ENCODE measurements at regions of chr4 and their contacts with region 1.

Region 1: GRCh38 chr4:77156533-77156911 is 485 bp upstream of the CCNG2 start:
- DNase-seq: peak; percentile 99
- H3K4me3 ChIP-seq: peak overlapping the region; percentile 87 to 98
- H3K4me3 Mint-ChIP-seq: peak overlapping the region; percentile 92 to 100 (median 98)
- H3K27ac ChIP-seq: peak overlapping the region; percentile 77
- H3K27ac Mint-ChIP-seq: peak overlapping the region; percentile 97 to 99 (median 98)
- H3K4me1 ChIP-seq: peaks cover 35% of the 10 kb centered on the region
- H3K4me1 Mint-ChIP-seq: peaks cover 16 to 54% (median 24%) of the 10 kb centered on the region in 4 donors
- H3K27me3 ChIP-seq: no peaks in the 10 kb centered on the region
- H3K27me3 Mint-ChIP-seq: peaks cover 0 to 6% of the 10 kb centered on the region in 2 donors

Region 2: GRCh38 chr4:75940692-75941253 is 1215.7 kb before region 1 on chr4 and contains the start of gene NAAA:
- CTCF ChIA-PET with region 1: no interaction called
- POLR2A ChIA-PET with region 1: no interaction called
- intact Hi-C with region 1: loop called (anchors 2 kb)
- DNase-seq: peak; percentile 73 to 84 (median 80)
- H3K4me3 ChIP-seq: peak within 1 kb of the TSS; percentile 80 to 98
- H3K4me3 Mint-ChIP-seq: peak within 1 kb of the TSS; percentile 97 to 99 (median 98)
- H3K27ac ChIP-seq: peak within 1 kb of the TSS; percentile 75
- H3K27ac Mint-ChIP-seq: peak within 1 kb of the TSS; percentile 96 to 98 (median 98)
- H3K4me1 ChIP-seq: peaks cover 19% of the 10 kb centered on the region
- H3K4me1 Mint-ChIP-seq: peaks cover 10 to 35% (median 19%) of the 10 kb centered on the region in 4 donors
- H3K27me3 ChIP-seq: no peaks in the 10 kb centered on the region
- H3K27me3 Mint-ChIP-seq: no peaks in the 10 kb centered on the region
- total RNA-seq, gene NAAA: 86.1 to 92.2 TPM

Region 3: DNA sequence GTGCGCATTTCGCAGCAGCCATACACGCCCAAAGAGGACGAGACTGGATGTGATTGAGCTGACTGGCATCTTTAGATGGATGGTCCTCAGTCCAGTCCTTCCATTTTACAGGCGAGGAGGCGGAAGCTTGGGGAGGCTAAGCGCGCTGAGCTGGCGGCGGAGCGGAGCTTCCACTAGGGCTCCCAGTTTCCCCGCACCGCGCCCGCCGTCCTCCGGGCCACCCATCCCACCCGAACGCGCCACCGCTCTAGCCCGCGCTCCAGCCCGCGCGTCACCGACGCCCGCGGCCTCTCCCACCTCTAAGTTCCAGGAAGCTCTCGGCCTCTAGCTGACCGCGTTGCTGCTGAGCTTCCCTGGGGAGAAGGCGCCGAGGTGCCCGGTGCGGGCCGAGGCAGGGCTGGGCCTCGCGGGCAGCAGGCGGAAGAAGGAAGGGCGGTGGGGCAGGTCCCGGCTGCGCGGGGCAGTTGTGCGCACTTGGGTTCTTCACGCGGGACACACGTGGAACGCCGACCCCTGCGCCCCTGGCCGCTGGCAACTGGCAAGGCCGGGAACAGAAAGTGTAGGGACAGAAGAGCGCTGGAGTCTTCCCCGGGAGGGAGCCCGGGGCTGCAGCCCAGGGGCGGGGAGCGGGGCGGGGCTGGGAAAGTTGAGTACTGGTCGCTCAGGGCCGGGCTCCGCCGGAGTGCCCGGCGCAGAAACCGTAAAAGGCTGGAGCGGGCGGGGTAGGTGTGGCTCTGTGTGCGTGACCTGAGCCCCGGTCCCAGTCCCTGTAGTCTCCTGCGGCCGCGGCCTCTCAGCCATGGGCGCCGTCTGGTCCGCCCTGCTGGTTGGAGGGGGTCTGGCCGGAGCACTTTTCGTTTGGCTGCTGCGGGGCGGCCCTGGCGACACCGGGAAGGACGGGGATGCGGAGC is 850.3 kb before region 1 on chr4 and contains the start of gene STBD1:
- CTCF ChIA-PET with region 1: no interaction called
- POLR2A ChIA-PET with region 1: no interaction called
- intact Hi-C with region 1: loop called (anchors 5 kb)
- DNase-seq: peak; percentile 24 to 43 (median 32)
- H3K4me3 ChIP-seq: peak within 1 kb of the TSS; percentile 30 to 68
- H3K4me3 Mint-ChIP-seq: peak within 1 kb of the TSS; percentile 81 to 93 (median 86)
- H3K27ac ChIP-seq: peak within 1 kb of the TSS; percentile 34
- H3K27ac Mint-ChIP-seq: peak within 1 kb of the TSS; percentile 12 to 83 (median 60)
- H3K4me1 ChIP-seq: peaks cover 39% of the 10 kb centered on the region
- H3K4me1 Mint-ChIP-seq: peaks cover 29 to 54% (median 41%) of the 10 kb centered on the region in 4 donors
- H3K27me3 ChIP-seq: no peaks in the 10 kb centered on the region
- H3K27me3 Mint-ChIP-seq: no peaks in the 10 kb centered on the region
- total RNA-seq, gene STBD1: 3.6 to 3.8 TPM

Region 4: GRCh38 chr4:76485450-76485849 is 671.1 kb before region 1 on chr4:
- CTCF ChIA-PET with region 1: no interaction called
- POLR2A ChIA-PET with region 1: no interaction called
- intact Hi-C with region 1: no loop called
- DNase-seq: no peak
- H3K4me3 ChIP-seq: no peak overlapping the region
- H3K4me3 Mint-ChIP-seq: no peak overlapping the region
- H3K27ac ChIP-seq: no peak overlapping the region
- H3K27ac Mint-ChIP-seq: no peak overlapping the region
- H3K4me1 ChIP-seq: no peaks in the 10 kb centered on the region
- H3K4me1 Mint-ChIP-seq: no peaks in the 10 kb centered on the region
- H3K27me3 ChIP-seq: no peaks in the 10 kb centered on the region
- H3K27me3 Mint-ChIP-seq: peaks cover 10 to 18% of the 10 kb centered on the region in 2 donors

Region 5: GRCh38 chr4:76993787-76994641 is 162.5 kb before region 1 on chr4:
- CTCF ChIA-PET with region 1: no interaction called
- POLR2A ChIA-PET with region 1: interaction called, 3 read pairs
- intact Hi-C with region 1: loop called (anchors 2 kb)
- DNase-seq: peak; percentile 75 to 89 (median 80)
- H3K4me3 ChIP-seq: peak overlapping the region in 1 of 2 donors; percentile 5
- H3K4me3 Mint-ChIP-seq: peak overlapping the region; percentile 71 to 88 (median 81)
- H3K27ac ChIP-seq: no peak overlapping the region
- H3K27ac Mint-ChIP-seq: peak overlapping the region; percentile 83 to 96 (median 90)
- H3K4me1 ChIP-seq: peaks cover 64% of the 10 kb centered on the region
- H3K4me1 Mint-ChIP-seq: peaks cover 39 to 65% (median 51%) of the 10 kb centered on the region in 4 donors
- H3K27me3 ChIP-seq: no peaks in the 10 kb centered on the region
- H3K27me3 Mint-ChIP-seq: peaks cover 0 to 1% of the 10 kb centered on the region in 2 donors

Region 6: GRCh38 chr4:77193511-77194102 is 37.1 kb after region 1 on chr4:
- CTCF ChIA-PET with region 1: interaction called, 5 read pairs
- POLR2A ChIA-PET with region 1: interaction called, 9 read pairs
- intact Hi-C with region 1: loop called (anchors 1 kb)
- DNase-seq: peak; percentile 69 to 80 (median 70)
- H3K4me3 ChIP-seq: peak overlapping the region in 1 of 2 donors; percentile 41
- H3K4me3 Mint-ChIP-seq: peak overlapping the region; percentile 87 to 96 (median 91)
- H3K27ac ChIP-seq: peak overlapping the region; percentile 8
- H3K27ac Mint-ChIP-seq: peak overlapping the region; percentile 75 to 95 (median 90)
- H3K4me1 ChIP-seq: peaks cover 14% of the 10 kb centered on the region
- H3K4me1 Mint-ChIP-seq: peaks cover 12 to 19% (median 15%) of the 10 kb centered on the region in 4 donors
- H3K27me3 ChIP-seq: no peaks in the 10 kb centered on the region
- H3K27me3 Mint-ChIP-seq: peaks cover 0 to 2% of the 10 kb centered on the region in 2 donors

Region 7: DNA sequence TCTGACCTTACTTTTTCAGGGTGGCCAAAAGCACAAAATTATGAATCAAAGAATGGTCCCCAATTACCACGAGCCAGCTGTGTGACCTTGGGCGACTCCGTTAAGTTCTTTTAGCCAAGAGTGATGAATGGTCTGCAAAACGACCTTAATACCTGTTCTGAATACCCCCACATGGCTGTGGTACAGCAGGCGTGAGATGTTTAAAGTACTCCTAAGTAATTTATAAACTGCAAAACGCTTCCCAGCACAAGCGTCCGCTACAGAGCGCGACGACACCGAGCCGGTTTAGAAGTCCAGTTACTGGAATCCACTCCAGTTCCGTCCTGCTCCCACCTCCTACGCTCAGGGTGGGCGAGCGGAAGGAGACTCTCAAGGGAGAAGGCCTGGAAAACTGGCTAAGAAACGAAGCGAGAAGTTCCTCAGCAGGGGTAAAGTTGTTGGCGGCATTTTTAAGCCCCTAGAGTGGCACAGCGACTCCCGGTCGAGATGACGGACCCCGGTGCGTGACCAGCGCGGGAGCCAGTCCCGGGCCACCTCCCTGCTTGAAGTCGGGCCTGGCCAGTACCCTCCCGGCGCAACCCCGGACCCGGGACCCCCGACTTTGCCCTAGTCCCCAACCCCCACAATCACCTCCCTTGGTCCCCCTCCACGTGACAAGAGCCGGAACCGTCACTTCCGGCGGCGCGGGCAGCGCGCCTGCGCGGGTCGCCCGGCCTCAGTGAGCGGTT is 1618.9 kb after region 1 on chr4:
- CTCF ChIA-PET with region 1: no interaction called
- POLR2A ChIA-PET with region 1: no interaction called
- intact Hi-C with region 1: loop called (anchors 5 kb)
- DNase-seq: peak; percentile 83 to 90 (median 89)
- H3K4me3 ChIP-seq: peak overlapping the region; percentile 79 to 91
- H3K4me3 Mint-ChIP-seq: peak overlapping the region; percentile 93 to 96 (median 95)
- H3K27ac ChIP-seq: peak overlapping the region; percentile 77
- H3K27ac Mint-ChIP-seq: peak overlapping the region; percentile 92 to 98 (median 96)
- H3K4me1 ChIP-seq: peaks cover 13% of the 10 kb centered on the region
- H3K4me1 Mint-ChIP-seq: peaks cover 12 to 22% (median 15%) of the 10 kb centered on the region in 4 donors
- H3K27me3 ChIP-seq: no peaks in the 10 kb centered on the region
- H3K27me3 Mint-ChIP-seq: no peaks in the 10 kb centered on the region